Activated T-helper 2 cell treated with anti-CD3 and anti-CD28 coated beads, Interferon-gamma antibody, Interleukin-2, Interleukin-4, amounts not matched to agents 10 μg/mL and 5 μg/mL and 100 μg/mL, durations not matched to agents 14 hours and 24 hours and 36 hours (primary cell): ENCODE measurements at regions of chr3 and their contacts with region 1.

Region 1: GRCh38 chr3:105876780-105877327 is 8.0 kb upstream of the CBLB start:
- DNase-seq: no peak
- H3K4me3 Mint-ChIP-seq: peak overlapping the region; percentile 34
- H3K27ac Mint-ChIP-seq: peak overlapping the region; percentile 75
- H3K4me1 Mint-ChIP-seq: peaks cover 32% of the 10 kb centered on the region
- H3K27me3 Mint-ChIP-seq: no peaks in the 10 kb centered on the region

Region 2: DNA sequence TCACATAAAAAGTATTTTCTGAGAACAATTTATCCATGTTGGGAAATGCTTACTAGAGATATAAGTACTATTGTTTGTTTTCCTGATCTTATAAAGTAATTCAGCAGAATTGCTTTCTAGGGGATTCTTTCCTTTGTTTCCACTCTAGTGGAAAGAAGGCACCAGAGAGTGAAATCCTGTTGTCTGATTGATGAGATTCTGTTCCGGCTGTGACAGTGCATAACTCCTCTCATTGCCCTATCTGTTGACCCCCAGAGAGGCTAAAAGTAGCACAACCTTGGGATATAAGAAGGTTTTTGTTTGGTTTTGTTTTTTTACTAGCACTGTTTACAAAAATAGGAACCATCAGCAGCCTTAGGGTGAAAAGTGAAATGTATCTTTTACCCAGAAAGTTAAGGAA is 396.1 kb before region 1 on chr3:
- intact Hi-C with region 1: no loop called
- DNase-seq: no peak
- H3K4me3 Mint-ChIP-seq: no peak overlapping the region
- H3K27ac Mint-ChIP-seq: no peak overlapping the region
- H3K4me1 Mint-ChIP-seq: no peaks in the 10 kb centered on the region
- H3K27me3 Mint-ChIP-seq: no peaks in the 10 kb centered on the region

Region 3: GRCh38 chr3:105988540-105989212 is 111.8 kb after region 1 on chr3:
- intact Hi-C with region 1: no loop called
- DNase-seq: no peak
- H3K4me3 Mint-ChIP-seq: peak overlapping the region; percentile 4
- H3K27ac Mint-ChIP-seq: peak overlapping the region; percentile 18
- H3K4me1 Mint-ChIP-seq: peaks cover 25% of the 10 kb centered on the region
- H3K27me3 Mint-ChIP-seq: no peaks in the 10 kb centered on the region

Region 4: GRCh38 chr3:106049821-106050220 is 173.0 kb after region 1 on chr3:
- intact Hi-C with region 1: loop called (anchors 1 kb)
- DNase-seq: no peak
- H3K4me3 Mint-ChIP-seq: no peak overlapping the region
- H3K27ac Mint-ChIP-seq: peak overlapping the region; percentile 85
- H3K4me1 Mint-ChIP-seq: peaks cover 21% of the 10 kb centered on the region
- H3K27me3 Mint-ChIP-seq: no peaks in the 10 kb centered on the region

Region 5: GRCh38 chr3:106534206-106534605 is 657.4 kb after region 1 on chr3:
- intact Hi-C with region 1: loop called (anchors 1 kb)
- DNase-seq: peak; percentile 26
- H3K4me3 Mint-ChIP-seq: no peak overlapping the region
- H3K27ac Mint-ChIP-seq: peak overlapping the region; percentile 14
- H3K4me1 Mint-ChIP-seq: peaks cover 16% of the 10 kb centered on the region
- H3K27me3 Mint-ChIP-seq: no peaks in the 10 kb centered on the region